ENCODE measurements at regions of chr2 and their contacts with region 1.

Region 1: GRCh38 chr2:53018825-53019425 is 748.7 kb upstream of the CHAC2 start:
- DNase-seq: no peak
- H3K4me3 Mint-ChIP-seq: no peak overlapping the region
- H3K27ac Mint-ChIP-seq: no peak overlapping the region
- H3K4me1 Mint-ChIP-seq: no peaks in the 10 kb centered on the region
- H3K27me3 Mint-ChIP-seq: no peaks in the 10 kb centered on the region
- CTCF ChIP-seq: peak; percentile 34

Region 2: GRCh38 chr2:53104263-53104662 is 85.3 kb after region 1 on chr2:
- CTCF ChIA-PET with region 1: interaction called, 3 read pairs
- intact Hi-C with region 1: loop called (anchors 5 kb)
- DNase-seq: peak; percentile 56
- H3K4me3 Mint-ChIP-seq: no peak overlapping the region
- H3K27ac Mint-ChIP-seq: peak overlapping the region; percentile 50
- H3K4me1 Mint-ChIP-seq: peaks cover 29% of the 10 kb centered on the region
- H3K27me3 Mint-ChIP-seq: no peaks in the 10 kb centered on the region
- CTCF ChIP-seq: no peak

Region 3: GRCh38 chr2:53182601-53183000 is 163.7 kb after region 1 on chr2:
- CTCF ChIA-PET with region 1: interaction called, 3 read pairs
- intact Hi-C with region 1: loop called (anchors 5 kb)
- DNase-seq: peak; percentile 14
- H3K4me3 Mint-ChIP-seq: no peak overlapping the region
- H3K27ac Mint-ChIP-seq: no peak overlapping the region
- H3K4me1 Mint-ChIP-seq: peaks cover 23% of the 10 kb centered on the region
- H3K27me3 Mint-ChIP-seq: no peaks in the 10 kb centered on the region
- CTCF ChIP-seq: no peak

Region 4: GRCh38 chr2:53202063-53202462 is 183.1 kb after region 1 on chr2:
- CTCF ChIA-PET with region 1: interaction called, 20 read pairs
- intact Hi-C with region 1: loop called (anchors 1 kb)
- DNase-seq: peak; percentile 56
- H3K4me3 Mint-ChIP-seq: no peak overlapping the region
- H3K27ac Mint-ChIP-seq: peak overlapping the region; percentile 54
- H3K4me1 Mint-ChIP-seq: peaks cover 9% of the 10 kb centered on the region
- H3K27me3 Mint-ChIP-seq: no peaks in the 10 kb centered on the region
- CTCF ChIP-seq: no peak

Region 5: DNA sequence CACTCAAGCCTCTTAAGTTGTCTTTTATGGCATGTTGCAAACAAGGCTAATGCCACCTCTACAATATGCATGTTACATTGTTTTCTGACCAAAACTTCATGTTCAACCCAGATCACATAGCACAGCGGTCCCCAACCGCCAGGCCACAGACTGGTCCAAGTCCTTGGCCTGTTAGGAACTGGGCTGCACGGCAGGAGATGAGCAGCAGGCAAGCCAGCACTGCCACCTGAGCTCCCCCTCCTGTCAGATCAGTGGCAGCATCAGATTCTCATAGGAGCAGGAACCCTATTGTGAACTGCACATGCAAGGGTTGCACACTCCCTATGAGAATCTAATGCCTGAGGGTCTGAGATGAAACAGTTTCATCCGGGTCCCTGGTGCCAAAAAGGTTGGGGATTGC is 423.9 kb after region 1 on chr2:
- CTCF ChIA-PET with region 1: no interaction called
- intact Hi-C with region 1: loop called (anchors 2 kb)
- DNase-seq: peak; percentile 11
- H3K4me3 Mint-ChIP-seq: no peak overlapping the region
- H3K27ac Mint-ChIP-seq: no peak overlapping the region
- H3K4me1 Mint-ChIP-seq: peaks cover 10% of the 10 kb centered on the region
- H3K27me3 Mint-ChIP-seq: no peaks in the 10 kb centered on the region
- CTCF ChIP-seq: no peak